CD4-positive, alpha-beta memory T cell (primary cell): ENCODE measurements at regions of chr4 and their contacts with region 1.

Region 1: DNA sequence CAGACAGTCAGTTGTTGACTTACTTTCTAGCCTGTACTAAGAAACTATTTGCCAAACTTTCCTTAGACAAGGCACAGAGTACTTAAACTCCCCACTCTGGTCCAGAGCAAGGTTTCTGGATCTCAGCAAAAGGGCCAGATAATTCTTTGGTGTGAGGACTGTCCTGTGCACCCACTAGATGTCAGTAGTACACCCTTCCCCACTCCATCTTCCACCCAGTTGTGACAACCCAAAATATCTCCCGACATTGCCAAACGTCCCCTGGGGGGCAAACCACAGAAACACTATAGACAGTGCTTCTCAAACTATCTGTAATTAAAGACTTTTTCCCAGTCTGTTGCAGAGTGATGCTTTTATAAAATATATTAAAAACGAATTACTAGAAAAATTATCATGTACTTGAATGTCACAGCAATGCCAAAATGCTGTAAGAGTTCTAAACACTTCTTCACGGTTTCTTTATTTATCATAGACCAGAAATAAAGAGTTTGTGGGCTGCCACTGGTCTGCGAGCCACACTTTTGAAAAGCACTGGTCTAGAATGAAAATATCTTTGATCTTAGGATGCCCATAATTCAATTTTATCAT is 203.5 kb downstream of the PRDM5 start:
- DNase-seq: peak in 4 of 5 donors; percentile 6 to 11 (median 7)
- H3K4me3 ChIP-seq: no peak overlapping the region
- H3K4me3 Mint-ChIP-seq: no peak overlapping the region
- H3K27ac ChIP-seq: no peak overlapping the region
- H3K27ac Mint-ChIP-seq: no peak overlapping the region
- H3K4me1 ChIP-seq: no peaks in the 10 kb centered on the region
- H3K4me1 Mint-ChIP-seq: no peaks in the 10 kb centered on the region
- H3K27me3 ChIP-seq: no peaks in the 10 kb centered on the region
- H3K27me3 Mint-ChIP-seq: peaks cover 2 to 3% of the 10 kb centered on the region in 2 donors

Region 2: DNA sequence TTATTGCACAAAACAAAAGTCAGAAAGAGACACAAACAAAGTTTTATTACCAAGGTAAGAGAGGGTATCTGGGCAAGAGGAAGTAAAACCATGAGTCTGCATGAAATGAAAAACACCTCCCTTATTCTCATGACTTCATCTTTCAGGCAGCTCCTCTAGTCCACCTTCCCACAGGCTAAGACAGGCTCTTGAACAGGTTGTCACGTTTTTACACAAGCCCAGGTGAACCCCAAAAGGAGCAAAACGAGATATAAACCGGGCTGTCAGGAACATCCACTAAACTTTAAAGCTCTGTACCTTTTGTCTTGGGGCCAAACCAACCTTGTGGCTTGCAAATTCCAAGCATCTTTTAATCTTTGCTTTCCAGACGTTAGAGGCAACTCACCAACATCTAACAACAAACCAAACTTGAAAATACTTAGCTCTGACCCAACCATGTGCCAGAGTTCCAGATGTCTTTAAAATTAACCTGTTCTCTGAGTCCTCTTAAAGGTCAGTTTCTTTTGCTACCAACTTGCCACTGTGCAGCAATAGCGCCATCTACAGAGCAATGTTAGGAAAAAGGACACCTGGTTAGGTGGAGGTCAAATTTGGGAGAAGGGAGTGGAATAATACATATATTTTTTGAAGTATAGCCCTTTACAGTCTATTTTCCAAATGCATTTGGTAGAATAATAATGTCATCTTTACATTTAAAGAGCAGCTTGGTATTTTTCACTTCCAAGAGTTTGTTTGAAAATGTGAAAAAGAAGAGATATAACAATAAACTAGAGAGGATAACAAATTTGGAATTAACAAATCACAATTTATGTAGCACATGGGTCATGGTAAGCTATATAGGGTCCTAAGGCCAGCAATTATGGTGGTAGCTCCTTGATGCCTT is 588.6 kb after region 1 on chr4:
- CTCF ChIA-PET with region 1: interaction called, 17 read pairs
- POLR2A ChIA-PET with region 1: no interaction called
- intact Hi-C with region 1: loop called (anchors 1 kb)
- DNase-seq: peak; percentile 44 to 53 (median 45)
- H3K4me3 ChIP-seq: no peak overlapping the region
- H3K4me3 Mint-ChIP-seq: peak overlapping the region in 1 of 8 donors; percentile 17
- H3K27ac ChIP-seq: no peak overlapping the region
- H3K27ac Mint-ChIP-seq: peak overlapping the region in 2 of 7 donors; percentile 29 to 73
- H3K4me1 ChIP-seq: peaks cover 6% of the 10 kb centered on the region
- H3K4me1 Mint-ChIP-seq: peaks cover 9 to 15% (median 13%) of the 10 kb centered on the region in 4 donors
- H3K27me3 ChIP-seq: no peaks in the 10 kb centered on the region
- H3K27me3 Mint-ChIP-seq: peaks cover 0 to 3% of the 10 kb centered on the region in 2 donors